Transverse colon (tissue), 4 donors: ENCODE measurements at regions of chr18 and their contacts with region 1.

Region 1: DNA sequence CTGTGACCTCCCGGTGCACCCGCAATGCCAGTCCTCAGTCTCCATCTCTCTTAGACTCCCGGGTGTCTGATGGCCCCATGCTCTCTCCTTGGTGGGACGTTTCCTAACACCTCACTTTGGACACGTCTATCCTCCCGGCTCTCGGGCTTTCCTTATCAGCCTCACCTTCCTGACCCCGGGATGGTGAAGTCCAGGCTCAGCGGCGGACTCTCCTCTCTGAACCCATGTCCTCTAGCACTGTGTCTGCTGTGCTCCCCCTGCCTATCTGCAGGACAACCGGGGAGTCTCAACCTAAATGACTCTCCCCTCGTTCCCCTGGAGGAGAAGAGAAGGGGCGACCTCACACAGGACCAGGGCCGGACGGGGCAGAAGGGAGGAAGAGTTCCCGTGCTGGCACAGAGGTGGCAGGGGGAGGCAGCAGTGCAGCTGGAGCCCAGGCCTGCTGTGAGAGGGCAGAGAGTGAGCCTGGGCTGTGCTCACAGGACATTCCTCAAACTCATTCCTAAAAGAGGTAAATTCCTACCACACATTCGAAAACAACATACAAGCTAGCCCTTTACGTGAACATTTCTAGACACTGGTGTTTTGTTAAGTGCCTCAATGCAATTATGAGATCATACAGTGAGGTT is 41.9 kb downstream of the MBP start:
- DNase-seq: no peak
- H3K4me3 ChIP-seq: no peak overlapping the region
- H3K27ac ChIP-seq: no peak overlapping the region
- H3K4me1 ChIP-seq: peaks cover 5 to 35% (median 23%) of the 10 kb centered on the region in 4 donors
- H3K27me3 ChIP-seq: no peaks in the 10 kb centered on the region
- CTCF ChIP-seq: no peak
- EP300 ChIP-seq: no peak
- POLR2A ChIP-seq: no peak

Region 2: GRCh38 chr18:77047787-77048419 is 42.8 kb before region 1 on chr18:
- in situ Hi-C with region 1: no loop called
- intact Hi-C with region 1: loop called (anchors 1 kb)
- DNase-seq: no peak
- H3K4me3 ChIP-seq: no peak overlapping the region
- H3K27ac ChIP-seq: no peak overlapping the region
- H3K4me1 ChIP-seq: peaks cover 0 to 8% (median 0%) of the 10 kb centered on the region in 4 donors
- H3K27me3 ChIP-seq: no peaks in the 10 kb centered on the region
- CTCF ChIP-seq: no peak
- EP300 ChIP-seq: no peak
- POLR2A ChIP-seq: no peak